ENCODE measurements at regions of chr20 and their contacts with region 1.

Region 1: DNA sequence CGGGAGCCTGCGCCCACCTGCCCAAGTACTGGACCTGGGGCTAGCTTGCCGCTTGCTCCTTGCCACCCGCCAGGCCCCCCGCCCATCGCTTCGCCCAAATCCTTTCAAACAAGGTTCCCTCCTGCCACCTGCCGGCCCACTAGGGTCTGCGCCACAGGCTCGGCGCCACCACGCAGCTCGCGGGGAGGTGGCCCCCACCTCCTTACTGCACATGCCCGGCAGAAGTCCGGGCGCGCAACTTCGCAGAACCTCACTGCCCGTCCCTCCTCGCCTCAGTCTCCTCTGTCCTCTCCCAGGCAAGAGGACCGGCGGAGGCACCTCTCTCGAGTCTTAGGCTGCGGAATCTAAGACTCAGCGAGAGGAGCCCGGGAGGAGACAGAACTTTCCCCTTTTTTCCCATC is 11.2 kb downstream of the GNAS-AS1 start:
- DNase-seq: peak; percentile 49

Region 2: DNA sequence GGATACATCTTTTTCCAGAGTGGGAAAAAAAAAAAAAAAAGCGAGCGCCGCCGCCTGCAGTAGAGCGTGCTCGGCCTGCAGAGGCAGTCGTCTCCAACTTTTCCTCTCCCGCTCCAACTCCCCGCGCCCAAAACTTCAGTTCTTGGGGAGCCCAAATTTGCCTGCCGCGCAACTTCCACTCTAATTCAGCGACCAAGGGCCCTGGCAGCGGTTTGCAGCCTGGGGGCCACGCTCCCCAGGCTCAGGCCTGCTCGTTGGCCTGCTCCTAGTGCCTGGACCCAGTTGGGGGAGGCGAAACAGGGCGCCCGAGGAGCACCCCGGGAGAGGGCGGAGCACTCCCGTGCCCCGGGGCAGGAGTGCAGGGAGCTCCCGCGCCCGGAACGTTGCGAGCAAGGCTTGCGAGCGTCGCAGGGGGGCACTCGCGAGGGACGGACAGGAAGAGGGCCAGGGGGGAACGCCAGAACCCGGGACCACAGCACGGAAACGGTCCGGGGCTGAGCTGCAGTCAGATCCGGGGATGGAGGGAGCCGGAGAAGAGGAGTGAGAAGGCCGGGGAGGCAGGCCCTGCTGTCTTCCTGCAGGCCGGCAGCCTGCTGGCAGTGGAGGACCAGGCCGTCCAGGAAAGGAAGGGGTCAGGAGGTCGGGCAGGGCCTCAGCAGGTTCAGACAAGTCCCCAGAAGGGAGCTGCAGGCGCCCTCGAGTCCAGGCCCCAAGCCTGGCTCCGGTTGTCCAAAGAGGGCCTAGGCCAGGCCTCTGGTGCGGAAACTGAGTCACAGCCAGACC is 188.5 kb before region 1 on chr20 and contains the start of gene STX16:
- in situ Hi-C with region 1: loop called (anchors 25 kb)
- DNase-seq: peak; percentile 95
- total RNA-seq, gene STX16: 16.9 and 20.0 TPM in 2 replicates

Region 3: GRCh38 chr20:59299944-59300331 is 460.5 kb after region 1 on chr20:
- in situ Hi-C with region 1: loop called (anchors 25 kb)
- DNase-seq: no peak